Caco-2 (cell line): ENCODE measurements at regions of chr7 and their contacts with region 1.

Region 1: DNA sequence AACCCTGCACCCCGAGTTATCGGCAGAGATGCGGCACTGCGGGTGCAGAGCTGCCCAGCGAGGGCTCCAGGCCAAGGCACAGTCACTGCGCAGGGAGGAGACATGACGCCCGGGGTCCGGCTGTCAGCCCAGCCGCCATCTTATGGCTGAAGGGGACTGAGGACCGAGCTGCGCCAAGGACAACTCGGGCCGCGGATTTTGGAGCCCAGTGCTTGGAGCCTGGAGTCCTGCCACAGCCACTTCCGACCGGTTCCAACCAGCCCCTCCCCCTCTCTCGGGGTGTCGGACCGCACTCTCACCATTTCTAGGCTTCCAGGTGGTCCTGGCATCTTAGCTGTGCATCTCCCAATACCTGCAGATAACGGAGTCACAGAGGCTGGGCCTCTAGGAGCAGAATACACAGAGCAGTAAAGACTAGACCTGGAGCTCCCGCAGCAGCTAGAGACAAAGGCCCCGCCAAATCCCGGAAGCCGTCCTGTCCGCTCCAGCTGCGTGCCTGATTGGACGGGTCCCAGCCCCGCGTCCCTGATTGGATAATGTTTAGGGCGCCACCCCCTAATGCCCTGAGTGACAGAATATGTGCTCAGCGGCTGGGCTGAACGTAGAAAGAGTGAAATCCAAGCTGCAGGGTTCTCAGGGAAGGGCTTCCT is at the start of gene ZNF680:
- DNase-seq: peak; percentile 95 to 97
- H3K4me3 ChIP-seq: peak within 1 kb of the TSS; percentile 75
- H3K4me3 Mint-ChIP-seq: peak within 1 kb of the TSS; percentile 99
- H3K27ac Mint-ChIP-seq: peak within 1 kb of the TSS; percentile 100
- H3K4me1 ChIP-seq: no peaks in the 10 kb centered on the region
- H3K4me1 Mint-ChIP-seq: peaks cover 12% of the 10 kb centered on the region
- H3K27me3 ChIP-seq: no peaks in the 10 kb centered on the region
- H3K27me3 Mint-ChIP-seq: no peaks in the 10 kb centered on the region
- CTCF ChIP-seq: no peak
- total RNA-seq, gene ZNF680: 13.1 and 15.2 TPM in 2 replicates

Region 2: DNA sequence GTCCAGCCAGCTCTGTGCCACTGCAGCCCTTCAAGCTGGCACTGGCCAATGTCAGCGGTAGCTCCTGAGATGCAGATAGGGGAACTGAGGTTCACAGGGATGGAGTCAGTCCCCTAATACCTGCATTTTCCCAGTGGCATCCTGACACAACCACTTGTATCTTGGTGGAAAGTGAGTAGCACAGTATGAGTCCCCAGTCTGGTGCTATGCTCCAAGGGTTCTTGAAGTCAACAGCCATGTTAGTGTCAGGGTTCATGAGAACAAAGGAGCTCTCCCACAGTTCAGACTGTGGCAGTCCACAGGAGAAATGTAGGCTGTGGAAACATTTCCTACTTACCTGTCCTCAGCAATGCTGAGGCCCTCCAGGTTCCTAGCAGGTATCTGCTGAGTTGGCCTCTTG is 133.5 kb before region 1 on chr7:
- CTCF ChIA-PET with region 1: no interaction called
- POLR2A ChIA-PET with region 1: no interaction called
- intact Hi-C with region 1: loop called (anchors 5 kb)
- DNase-seq: no peak
- H3K4me3 ChIP-seq: no peak overlapping the region
- H3K4me3 Mint-ChIP-seq: no peak overlapping the region
- H3K27ac Mint-ChIP-seq: no peak overlapping the region
- H3K4me1 ChIP-seq: peaks cover 11% of the 10 kb centered on the region; the same call in 1 of the 2 replicates
- H3K4me1 Mint-ChIP-seq: peaks cover 7% of the 10 kb centered on the region
- H3K27me3 ChIP-seq: no peaks in the 10 kb centered on the region
- H3K27me3 Mint-ChIP-seq: no peaks in the 10 kb centered on the region
- CTCF ChIP-seq: no peak

Region 3: DNA sequence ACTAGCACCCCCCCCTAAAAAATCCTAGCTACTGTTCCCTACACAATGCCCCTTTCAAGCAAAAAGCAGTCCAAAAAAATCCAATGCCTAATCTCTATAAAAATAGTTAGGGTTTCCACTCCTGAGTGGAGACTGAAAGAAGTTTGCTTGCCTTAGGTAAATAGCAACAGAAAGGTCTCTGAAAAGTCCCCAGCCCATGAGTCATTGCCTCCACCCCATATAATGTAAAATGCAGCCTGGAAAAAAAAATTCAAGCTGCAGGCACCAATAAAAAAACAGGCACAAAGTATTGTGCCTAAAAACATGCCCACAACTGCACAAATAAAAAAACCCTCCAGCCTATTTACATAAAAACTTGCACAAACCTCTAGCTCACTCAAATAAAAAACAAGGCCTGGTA is 47.4 kb before region 1 on chr7:
- CTCF ChIA-PET with region 1: no interaction called
- POLR2A ChIA-PET with region 1: no interaction called
- intact Hi-C with region 1: loop called (anchors 10 kb)
- DNase-seq: no peak
- H3K4me3 ChIP-seq: no peak overlapping the region
- H3K4me3 Mint-ChIP-seq: no peak overlapping the region
- H3K27ac Mint-ChIP-seq: no peak overlapping the region
- H3K4me1 ChIP-seq: no peaks in the 10 kb centered on the region
- H3K4me1 Mint-ChIP-seq: no peaks in the 10 kb centered on the region
- H3K27me3 ChIP-seq: no peaks in the 10 kb centered on the region
- H3K27me3 Mint-ChIP-seq: no peaks in the 10 kb centered on the region
- CTCF ChIP-seq: no peak

Region 4: DNA sequence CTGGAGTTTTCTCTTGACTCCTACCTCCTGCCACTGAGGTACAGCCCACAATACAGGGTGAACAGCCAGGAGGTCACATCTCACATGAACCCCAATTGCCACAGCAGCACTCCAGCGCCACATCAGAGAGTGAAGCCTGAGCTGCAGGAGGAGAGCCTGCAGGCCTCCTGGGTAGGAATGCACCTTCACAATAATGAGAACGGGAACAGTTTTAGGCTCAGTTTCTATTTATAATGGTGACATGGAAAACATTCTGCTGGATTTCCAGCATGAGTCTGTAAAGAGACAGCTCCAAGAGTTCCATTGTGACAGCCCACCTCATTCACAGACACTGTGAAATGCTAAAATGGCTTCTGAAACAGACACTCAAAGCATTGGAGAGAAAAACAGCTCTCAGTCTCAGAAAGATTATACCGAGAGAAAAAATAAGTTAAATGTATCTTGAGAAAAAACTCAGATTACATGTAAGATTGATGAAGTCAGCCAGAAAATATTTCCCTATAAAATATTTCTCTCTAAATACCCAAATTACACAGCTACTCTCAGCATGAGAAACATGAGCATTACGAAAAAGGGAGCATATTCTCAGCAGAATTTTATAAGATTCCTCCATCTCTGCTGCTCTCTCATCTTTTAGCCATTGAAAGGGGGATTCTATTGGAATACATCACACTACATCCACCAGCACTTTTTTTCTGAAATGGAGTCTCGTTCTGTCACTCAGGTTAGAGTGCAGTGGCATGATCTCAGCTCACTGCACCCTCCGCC is 11.2 kb before region 1 on chr7:
- CTCF ChIA-PET with region 1: no interaction called
- POLR2A ChIA-PET with region 1: no interaction called
- intact Hi-C with region 1: no loop called
- DNase-seq: no peak
- H3K4me3 ChIP-seq: no peak overlapping the region
- H3K4me3 Mint-ChIP-seq: no peak overlapping the region
- H3K27ac Mint-ChIP-seq: no peak overlapping the region
- H3K4me1 ChIP-seq: no peaks in the 10 kb centered on the region
- H3K4me1 Mint-ChIP-seq: no peaks in the 10 kb centered on the region
- H3K27me3 ChIP-seq: no peaks in the 10 kb centered on the region
- H3K27me3 Mint-ChIP-seq: no peaks in the 10 kb centered on the region
- CTCF ChIP-seq: no peak

Region 5: GRCh38 chr7:64665980-64666662 is 103.4 kb after region 1 on chr7 and contains the start of gene ZNF107:
- CTCF ChIA-PET with region 1: no interaction called
- POLR2A ChIA-PET with region 1: no interaction called
- intact Hi-C with region 1: loop called (anchors 2 kb)
- DNase-seq: peak; percentile 93 to 97
- H3K4me3 ChIP-seq: peak within 1 kb of the TSS; percentile 70
- H3K4me3 Mint-ChIP-seq: peak within 1 kb of the TSS; percentile 94
- H3K27ac Mint-ChIP-seq: peak within 1 kb of the TSS; percentile 95
- H3K4me1 ChIP-seq: peaks cover 10% of the 10 kb centered on the region; the same call in 1 of the 2 replicates
- H3K4me1 Mint-ChIP-seq: peaks cover 16% of the 10 kb centered on the region
- H3K27me3 ChIP-seq: no peaks in the 10 kb centered on the region
- H3K27me3 Mint-ChIP-seq: no peaks in the 10 kb centered on the region
- CTCF ChIP-seq: no peak
- total RNA-seq, gene ZNF107: 12.0 and 13.0 TPM in 2 replicates